Naive thymus-derived CD8-positive, alpha-beta T cell (primary cell): ENCODE measurements at regions of chr17 and their contacts with region 1.

Region 1: GRCh38 chr17:68457539-68458259 is 403 bp upstream of the WIPI1 start:
- DNase-seq: peak; percentile 96 to 99 (median 98)
- ATAC-seq: peak; percentile 93
- H3K4me3 Mint-ChIP-seq: peak overlapping the region; percentile 71 to 89 (median 82)
- H3K27ac Mint-ChIP-seq: peak overlapping the region in 9 of 10 donors; percentile 55 to 96 (median 94)
- H3K4me1 Mint-ChIP-seq: peaks cover 15 to 69% (median 49%) of the 10 kb centered on the region in 4 donors
- H3K27me3 Mint-ChIP-seq: peaks cover 0 to 2% (median 0%) of the 10 kb centered on the region in 5 donors

Region 2: GRCh38 chr17:68435876-68436842 is 21.5 kb before region 1 on chr17:
- POLR2A ChIA-PET with region 1: interaction called, 12 read pairs
- DNase-seq: peak; percentile 64 to 90 (median 82)
- ATAC-seq: peak; percentile 69 to 73
- H3K4me3 Mint-ChIP-seq: peak overlapping the region in 9 of 10 donors; percentile 10 to 81 (median 51)
- H3K27ac Mint-ChIP-seq: peak overlapping the region in 9 of 10 donors; percentile 46 to 87 (median 74)
- H3K4me1 Mint-ChIP-seq: peaks cover 22 to 57% (median 56%) of the 10 kb centered on the region in 4 donors
- H3K27me3 Mint-ChIP-seq: no peaks in the 10 kb centered on the region

Region 3: DNA sequence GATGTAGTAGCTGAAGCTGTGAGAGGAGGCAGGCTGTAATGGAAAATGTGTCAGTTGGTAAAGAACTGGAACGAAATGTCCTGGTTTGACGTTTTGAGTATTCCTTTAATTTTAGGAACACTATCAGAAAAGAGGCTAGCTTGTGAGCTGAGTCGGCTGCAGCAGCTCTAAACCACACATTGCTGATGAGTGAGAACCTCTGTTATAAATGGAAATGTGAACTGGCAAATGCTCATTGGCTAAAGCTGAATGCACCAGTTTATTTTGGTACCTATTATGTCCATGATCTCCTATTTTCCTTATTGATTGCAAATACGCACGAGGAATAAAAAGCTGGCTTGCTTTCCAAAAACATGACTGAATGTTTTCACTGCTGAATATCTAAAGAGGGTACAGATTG is 10.6 kb after region 1 on chr17:
- POLR2A ChIA-PET with region 1: no interaction called
- DNase-seq: no peak
- ATAC-seq: no peak
- H3K4me3 Mint-ChIP-seq: no peak overlapping the region
- H3K27ac Mint-ChIP-seq: no peak overlapping the region
- H3K4me1 Mint-ChIP-seq: peaks cover 0 to 4% (median 0%) of the 10 kb centered on the region in 4 donors
- H3K27me3 Mint-ChIP-seq: peaks cover 0 to 10% (median 0%) of the 10 kb centered on the region in 5 donors

Region 4: GRCh38 chr17:68491381-68492231 is 33.9 kb after region 1 on chr17:
- POLR2A ChIA-PET with region 1: no interaction called
- DNase-seq: no peak
- ATAC-seq: no peak
- H3K4me3 Mint-ChIP-seq: no peak overlapping the region
- H3K27ac Mint-ChIP-seq: peak overlapping the region in 2 of 10 donors; percentile 48 to 51
- H3K4me1 Mint-ChIP-seq: peaks cover 6 to 36% (median 15%) of the 10 kb centered on the region in 4 donors
- H3K27me3 Mint-ChIP-seq: peaks cover 0 to 3% (median 0%) of the 10 kb centered on the region in 5 donors